ENCODE measurements at regions of chr14 and their contacts with region 1.

Region 1: DNA sequence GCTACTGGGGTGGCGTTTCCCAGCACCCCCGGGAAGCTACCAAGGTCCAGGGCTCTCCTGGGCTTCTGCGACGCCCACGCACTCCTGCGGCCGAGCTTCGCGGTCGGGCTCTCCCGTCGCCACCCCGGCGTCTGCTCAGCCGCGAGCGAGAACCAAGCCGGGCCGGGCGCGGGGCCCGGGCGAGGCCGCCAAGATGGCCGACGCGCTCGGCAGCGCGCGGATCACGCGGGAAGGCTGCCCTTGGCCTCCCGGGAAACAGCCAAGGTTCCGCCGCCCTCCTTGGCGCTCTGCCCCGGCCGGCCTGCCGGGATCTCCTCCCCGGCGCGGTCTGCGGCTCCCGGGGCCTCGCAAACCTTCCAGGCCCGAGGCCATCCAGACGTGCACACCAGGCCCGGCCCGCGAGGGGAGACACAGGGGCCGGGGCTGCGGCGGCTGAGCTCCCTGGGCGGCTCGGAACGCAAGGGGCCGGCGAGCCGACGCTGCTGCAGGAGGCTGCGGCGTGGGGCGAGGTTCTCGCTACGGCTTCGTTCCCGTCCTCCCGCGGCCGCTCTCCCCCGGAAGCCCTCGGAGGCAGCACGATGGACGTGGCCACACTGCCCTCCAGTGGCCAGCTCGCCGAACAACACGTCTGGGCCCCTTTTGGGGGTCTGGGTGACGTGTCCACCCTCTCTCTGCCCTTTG is 23.5 kb upstream of the ZFP36L1 start:
- DNase-seq: peak; percentile 92 to 96 (median 95)
- H3K4me3 ChIP-seq: peak overlapping the region; percentile 45
- H3K27ac ChIP-seq: peak overlapping the region; percentile 75 to 99
- H3K4me1 ChIP-seq: peaks cover 28% of the 10 kb centered on the region
- H3K27me3 ChIP-seq: no peaks in the 10 kb centered on the region
- CTCF ChIP-seq: peak; percentile 96 to 100 (median 98)
- EP300 ChIP-seq: no peak
- POLR2A ChIP-seq: peak; percentile 63

Region 2: GRCh38 chr14:68392393-68393141 is 423.8 kb before region 1 on chr14:
- intact Hi-C with region 1: loop called in 2 of 4 experiments (anchors 10 kb)
- DNase-seq: peak in 4 of 5 donors; percentile 65 to 75 (median 68)
- H3K4me3 ChIP-seq: no peak overlapping the region
- H3K27ac ChIP-seq: peak overlapping the region; percentile 17 to 76
- H3K4me1 ChIP-seq: peaks cover 43% of the 10 kb centered on the region
- H3K27me3 ChIP-seq: no peaks in the 10 kb centered on the region
- CTCF ChIP-seq: no peak
- EP300 ChIP-seq: no peak
- POLR2A ChIP-seq: no peak

Measured in ovary (tissue), 10 donors.